Calu3 (cell line): ENCODE measurements at regions of chr2 and their contacts with region 1.

Region 1: DNA sequence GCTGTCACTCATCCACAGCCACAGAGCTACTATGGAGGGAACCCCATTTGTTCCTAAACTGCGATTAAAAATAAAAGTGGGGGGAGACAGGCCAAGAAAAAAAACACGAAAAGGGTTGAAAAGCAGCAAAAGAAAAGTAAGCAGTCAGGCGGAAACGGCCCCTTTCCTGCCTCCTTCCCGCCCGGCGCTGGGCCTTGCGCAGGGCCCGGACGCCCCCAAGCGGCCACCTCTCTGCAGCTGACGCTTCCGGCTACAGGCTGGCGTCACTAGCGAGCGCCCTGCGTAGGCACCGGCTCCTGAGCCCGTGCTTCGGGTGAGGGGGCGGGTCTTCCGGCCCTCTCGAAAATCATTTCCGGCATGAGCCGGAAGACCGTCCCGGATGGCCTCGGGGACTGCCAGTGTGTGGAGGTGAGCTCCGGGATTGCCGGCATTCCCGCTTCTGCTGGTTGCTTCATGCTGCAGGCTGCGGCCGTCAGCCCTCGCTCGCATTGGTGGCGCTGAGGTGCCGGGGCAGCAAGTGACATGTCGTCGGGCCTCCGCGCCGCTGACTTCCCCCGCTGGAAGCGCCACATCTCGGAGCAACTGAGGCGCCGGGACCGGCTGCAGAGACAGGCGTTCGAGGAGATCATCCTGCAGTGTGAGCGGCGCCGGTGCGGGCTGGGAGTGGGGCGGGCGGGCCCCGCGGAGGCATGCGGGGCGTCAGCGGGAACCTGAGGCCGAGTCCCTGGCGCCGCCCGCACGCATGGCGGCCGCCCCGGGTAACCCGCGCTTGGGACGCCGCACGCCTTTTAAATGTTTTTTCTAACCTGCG is at the start of gene ATG16L1:
- DNase-seq: peak; percentile 97
- H3K4me3 Mint-ChIP-seq: peak within 1 kb of the TSS; percentile 81
- H3K27ac Mint-ChIP-seq: peak within 1 kb of the TSS; percentile 82
- H3K4me1 Mint-ChIP-seq: peaks cover 48% of the 10 kb centered on the region
- H3K27me3 Mint-ChIP-seq: no peaks in the 10 kb centered on the region
- CTCF ChIP-seq: peak; percentile 84
- total RNA-seq, gene ATG16L1: 45.0 and 47.6 TPM in 2 replicates

Region 2: DNA sequence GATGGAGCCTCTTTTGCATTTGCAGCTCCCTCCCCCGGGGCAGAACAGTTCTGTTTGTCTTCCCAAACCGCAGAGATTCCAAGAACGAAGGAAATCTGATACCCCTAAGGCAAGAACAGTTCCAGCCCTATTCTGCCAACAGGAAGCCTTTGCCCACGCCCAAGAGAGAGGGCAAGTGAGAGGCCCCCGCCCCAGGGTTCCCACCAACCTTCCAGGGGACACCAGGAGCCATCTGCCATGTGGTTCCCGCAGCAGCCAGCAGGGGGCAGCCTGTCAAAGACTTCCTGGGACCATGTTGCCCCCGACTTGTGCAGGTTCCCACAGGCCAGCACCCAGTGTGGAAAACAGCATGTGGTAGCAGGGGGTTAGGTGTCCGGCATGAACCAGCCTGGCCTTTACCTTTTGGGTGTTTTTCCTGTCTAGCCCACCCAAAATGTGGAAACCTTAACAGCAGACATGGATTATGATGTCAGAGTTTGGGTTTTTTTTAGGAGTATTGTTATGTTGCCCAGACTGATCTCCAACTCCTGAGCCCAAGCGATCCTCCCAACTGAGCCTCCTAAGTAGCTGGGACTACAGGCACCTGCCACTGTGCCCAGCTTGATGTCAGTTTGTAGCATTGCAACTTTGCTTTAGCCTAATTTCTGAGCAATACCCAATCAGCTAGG is 639.8 kb before region 1 on chr2:
- CTCF ChIA-PET with region 1: no interaction called
- intact Hi-C with region 1: loop called (anchors 10 kb)
- DNase-seq: peak; percentile 88
- H3K4me3 Mint-ChIP-seq: no peak overlapping the region
- H3K27ac Mint-ChIP-seq: no peak overlapping the region
- H3K4me1 Mint-ChIP-seq: peaks cover 9% of the 10 kb centered on the region
- H3K27me3 Mint-ChIP-seq: no peaks in the 10 kb centered on the region
- CTCF ChIP-seq: peak; percentile 87

Region 3: DNA sequence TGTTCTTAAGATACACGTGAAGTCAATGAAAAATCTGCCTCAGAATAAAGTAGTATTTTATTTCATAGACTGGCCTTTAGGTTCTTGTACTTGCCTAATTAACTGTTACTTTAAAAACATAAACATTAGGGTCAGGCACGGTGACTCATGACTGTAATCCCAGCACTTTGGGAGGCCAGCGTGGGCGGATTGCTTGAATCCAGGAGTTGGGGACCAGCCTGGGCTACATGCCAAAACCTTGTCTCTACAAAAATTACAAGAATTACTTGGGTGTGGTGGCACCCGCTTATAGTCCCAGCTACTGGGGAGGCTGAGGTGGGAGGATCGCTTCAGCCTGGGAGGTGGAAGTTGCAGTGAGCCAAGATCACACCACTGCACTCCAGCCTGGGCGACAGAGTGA is 397.4 kb before region 1 on chr2:
- CTCF ChIA-PET with region 1: no interaction called
- intact Hi-C with region 1: loop called (anchors 1 kb)
- DNase-seq: peak; percentile 63
- H3K4me3 Mint-ChIP-seq: no peak overlapping the region
- H3K27ac Mint-ChIP-seq: peak overlapping the region; percentile 60
- H3K4me1 Mint-ChIP-seq: peaks cover 37% of the 10 kb centered on the region
- H3K27me3 Mint-ChIP-seq: no peaks in the 10 kb centered on the region
- CTCF ChIP-seq: no peak

Region 4: DNA sequence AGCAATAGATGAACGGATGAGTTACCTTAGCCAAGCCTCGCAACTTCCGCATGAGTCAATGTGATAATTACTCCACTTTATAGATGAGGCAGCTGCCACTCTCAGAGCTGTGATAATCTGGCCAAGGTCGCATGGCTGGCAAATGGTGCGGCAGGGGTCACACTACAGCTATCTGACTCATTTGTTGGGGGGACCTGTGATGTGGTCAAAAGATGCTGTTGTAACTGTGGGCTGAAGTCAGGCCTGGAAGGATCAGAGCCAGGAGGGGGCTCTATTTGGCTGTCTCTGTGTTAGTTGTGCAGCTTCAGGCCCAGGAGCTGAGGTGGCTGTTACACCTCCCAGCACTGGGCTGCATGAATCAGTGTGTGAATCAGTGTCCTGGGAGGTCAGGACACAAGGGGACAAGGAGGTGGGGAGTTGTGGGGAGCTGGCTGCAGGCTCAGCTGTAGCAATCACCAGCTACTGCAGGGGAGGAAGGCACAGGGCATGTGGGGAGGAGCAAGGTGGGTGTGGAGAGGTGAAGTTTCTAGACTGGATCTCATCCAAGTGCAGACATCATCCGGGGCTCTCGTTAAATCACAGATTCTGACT is 271.5 kb before region 1 on chr2:
- CTCF ChIA-PET with region 1: interaction called, 3 read pairs
- intact Hi-C with region 1: loop called (anchors 2 kb)
- DNase-seq: peak; percentile 47
- H3K4me3 Mint-ChIP-seq: peak overlapping the region; percentile 5
- H3K27ac Mint-ChIP-seq: peak overlapping the region; percentile 43
- H3K4me1 Mint-ChIP-seq: peaks cover 31% of the 10 kb centered on the region
- H3K27me3 Mint-ChIP-seq: no peaks in the 10 kb centered on the region
- CTCF ChIP-seq: no peak

Region 5: DNA sequence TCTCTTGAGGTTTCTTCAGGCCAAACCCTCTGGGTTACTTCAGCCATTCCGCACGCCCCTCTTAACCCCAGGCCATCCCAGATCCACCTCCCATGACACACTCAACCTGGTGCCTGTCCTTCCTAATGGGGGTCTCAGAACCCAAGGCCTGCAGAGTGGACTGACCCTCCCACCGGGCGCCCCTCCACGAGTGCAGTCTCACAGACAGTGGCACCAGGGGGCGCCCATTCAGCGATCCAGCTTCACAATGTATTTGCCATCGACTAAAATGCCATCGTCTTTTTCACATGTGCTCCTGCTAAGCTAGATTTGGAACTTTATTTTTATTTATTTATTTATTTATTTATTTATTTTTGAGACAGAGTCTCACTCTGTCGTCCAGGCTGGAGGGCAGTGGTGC is 152.9 kb before region 1 on chr2:
- CTCF ChIA-PET with region 1: interaction called, 3 read pairs
- intact Hi-C with region 1: loop called (anchors 5 kb)
- DNase-seq: peak; percentile 35
- H3K4me3 Mint-ChIP-seq: no peak overlapping the region
- H3K27ac Mint-ChIP-seq: no peak overlapping the region
- H3K4me1 Mint-ChIP-seq: no peaks in the 10 kb centered on the region
- H3K27me3 Mint-ChIP-seq: peaks cover 41% of the 10 kb centered on the region
- CTCF ChIP-seq: peak; percentile 41